IMR-90 (cell line): ENCODE measurements at regions of chr1 and their contacts with region 1.

Region 1: DNA sequence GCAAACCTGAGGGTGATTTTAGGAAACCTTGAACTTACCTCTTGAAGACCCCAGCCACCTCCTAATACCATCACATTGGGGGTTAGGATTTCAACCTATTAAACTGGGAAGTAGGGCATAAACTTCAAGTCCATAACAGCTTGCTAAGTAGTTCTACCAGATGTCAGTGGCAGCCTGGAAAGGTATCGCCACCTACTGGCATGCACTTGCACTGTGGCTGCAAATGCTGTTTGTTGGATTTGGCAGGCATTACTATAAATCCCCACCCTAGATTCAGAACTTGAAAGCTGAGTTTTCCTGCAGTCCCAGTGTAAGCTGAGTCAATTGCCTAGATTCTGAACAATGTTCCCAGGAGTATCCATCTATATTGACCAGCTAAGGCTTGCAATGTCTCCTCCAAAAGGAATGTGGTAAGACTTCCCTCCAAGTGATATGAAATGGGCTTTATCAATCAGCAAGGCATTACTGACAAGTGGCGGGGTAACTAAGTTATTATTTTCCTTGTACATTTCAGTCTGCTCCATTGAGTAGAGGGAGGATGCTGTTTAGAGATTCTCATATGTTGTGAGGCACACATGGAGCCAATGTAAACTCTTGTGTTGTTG is 474.5 kb downstream of the PTPRC start:
- DNase-seq: peak; percentile 82
- ATAC-seq: peak; percentile 73; the same call in 1 of the 2 replicates
- H3K4me3 ChIP-seq: no peak overlapping the region
- H3K27ac ChIP-seq: no peak overlapping the region
- H3K4me1 ChIP-seq: no peaks in the 10 kb centered on the region
- H3K27me3 ChIP-seq: no peaks in the 10 kb centered on the region
- CTCF ChIP-seq: peak; percentile 87
- POLR2A ChIP-seq: no peak
- RAD21 ChIP-seq: peak; percentile 90

Region 2: GRCh38 chr1:198756470-198756869 is 356.9 kb before region 1 on chr1:
- CTCF ChIA-PET with region 1: interaction called, 3 read pairs
- POLR2A ChIA-PET with region 1: no interaction called
- dilution Hi-C with region 1: no loop called
- in situ Hi-C with region 1: no loop called
- intact Hi-C with region 1: loop called (anchors 5 kb)
- DNase-seq: peak; percentile 36
- ATAC-seq: peak; percentile 72; the same call in 1 of the 2 replicates
- H3K4me3 ChIP-seq: no peak overlapping the region
- H3K27ac ChIP-seq: no peak overlapping the region
- H3K4me1 ChIP-seq: no peaks in the 10 kb centered on the region
- H3K27me3 ChIP-seq: no peaks in the 10 kb centered on the region
- CTCF ChIP-seq: peak; percentile 49
- POLR2A ChIP-seq: no peak
- RAD21 ChIP-seq: peak; percentile 44

Region 3: GRCh38 chr1:198771563-198772153 is 341.7 kb before region 1 on chr1:
- CTCF ChIA-PET with region 1: interaction called, 5 read pairs
- POLR2A ChIA-PET with region 1: no interaction called
- dilution Hi-C with region 1: no loop called
- in situ Hi-C with region 1: loop called (anchors 25 kb)
- intact Hi-C with region 1: loop called (anchors 1 kb)
- DNase-seq: peak; percentile 56
- ATAC-seq: no peak; the same call in 1 of the 2 replicates
- H3K4me3 ChIP-seq: no peak overlapping the region
- H3K27ac ChIP-seq: no peak overlapping the region
- H3K4me1 ChIP-seq: peaks cover 3% of the 10 kb centered on the region; the same call in 1 of the 2 replicates
- H3K27me3 ChIP-seq: no peaks in the 10 kb centered on the region
- CTCF ChIP-seq: peak; percentile 64
- POLR2A ChIP-seq: no peak
- RAD21 ChIP-seq: peak; percentile 86

Region 4: GRCh38 chr1:198788561-198789064 is 324.8 kb before region 1 on chr1:
- CTCF ChIA-PET with region 1: no interaction called
- POLR2A ChIA-PET with region 1: no interaction called
- dilution Hi-C with region 1: no loop called
- in situ Hi-C with region 1: loop called (anchors 25 kb)
- intact Hi-C with region 1: no loop called
- DNase-seq: no peak
- ATAC-seq: no peak
- H3K4me3 ChIP-seq: no peak overlapping the region
- H3K27ac ChIP-seq: no peak overlapping the region
- H3K4me1 ChIP-seq: no peaks in the 10 kb centered on the region
- H3K27me3 ChIP-seq: no peaks in the 10 kb centered on the region
- CTCF ChIP-seq: peak; percentile 9; the same call in 1 of the 2 replicates
- POLR2A ChIP-seq: no peak
- RAD21 ChIP-seq: no peak

Region 5: DNA sequence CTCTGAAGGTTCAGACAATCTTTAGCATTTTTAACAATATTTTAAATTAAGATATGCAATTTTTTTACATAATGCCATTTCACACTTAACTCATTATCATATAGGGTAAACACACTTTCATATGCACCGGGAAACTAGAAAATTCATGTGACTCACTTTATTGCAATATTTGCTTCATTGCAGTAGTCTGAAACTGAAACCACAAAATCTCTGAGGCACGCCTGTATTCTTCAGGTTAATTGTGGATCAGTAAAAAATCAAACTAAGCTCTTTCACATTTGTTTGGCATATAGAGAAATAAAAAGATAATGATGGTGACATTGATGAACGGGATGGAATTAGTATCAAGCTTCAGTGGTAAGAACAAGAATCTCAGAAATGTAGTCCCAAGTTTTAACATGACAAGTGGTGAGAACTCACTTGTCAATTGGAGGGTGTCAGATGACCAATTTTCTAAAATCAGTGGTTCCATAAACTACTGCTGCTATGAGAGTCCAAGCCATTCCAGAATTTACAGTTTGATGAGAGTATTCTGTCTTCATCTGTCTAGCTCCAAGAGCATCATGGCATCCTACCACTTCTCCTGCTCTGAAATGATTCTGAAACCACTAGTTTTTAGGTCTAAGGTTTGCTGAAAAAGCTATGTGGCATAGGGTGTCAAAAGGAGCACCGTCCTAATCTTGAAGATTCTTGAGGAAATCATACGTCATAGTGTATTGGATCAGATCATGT is 193.5 kb before region 1 on chr1:
- CTCF ChIA-PET with region 1: no interaction called
- POLR2A ChIA-PET with region 1: no interaction called
- dilution Hi-C with region 1: no loop called
- in situ Hi-C with region 1: no loop called
- intact Hi-C with region 1: loop called (anchors 5 kb)
- DNase-seq: no peak
- ATAC-seq: peak; percentile 11; the same call in 1 of the 2 replicates
- H3K4me3 ChIP-seq: no peak overlapping the region
- H3K27ac ChIP-seq: no peak overlapping the region
- H3K4me1 ChIP-seq: peaks cover 3% of the 10 kb centered on the region; the same call in 1 of the 2 replicates
- H3K27me3 ChIP-seq: no peaks in the 10 kb centered on the region
- CTCF ChIP-seq: no peak
- POLR2A ChIP-seq: no peak
- RAD21 ChIP-seq: no peak

Region 6: GRCh38 chr1:199394856-199395255 is 281.5 kb after region 1 on chr1:
- CTCF ChIA-PET with region 1: no interaction called
- POLR2A ChIA-PET with region 1: no interaction called
- dilution Hi-C with region 1: no loop called
- in situ Hi-C with region 1: no loop called
- intact Hi-C with region 1: no loop called
- DNase-seq: no peak
- ATAC-seq: no peak
- H3K4me3 ChIP-seq: no peak overlapping the region
- H3K27ac ChIP-seq: no peak overlapping the region
- H3K4me1 ChIP-seq: no peaks in the 10 kb centered on the region
- H3K27me3 ChIP-seq: no peaks in the 10 kb centered on the region
- CTCF ChIP-seq: no peak
- POLR2A ChIP-seq: no peak
- RAD21 ChIP-seq: no peak

Region 7: GRCh38 chr1:199463521-199464128 is 350.3 kb after region 1 on chr1:
- CTCF ChIA-PET with region 1: no interaction called
- POLR2A ChIA-PET with region 1: no interaction called
- dilution Hi-C with region 1: no loop called
- in situ Hi-C with region 1: no loop called
- intact Hi-C with region 1: loop called (anchors 5 kb)
- DNase-seq: peak; percentile 82
- ATAC-seq: peak; percentile 92
- H3K4me3 ChIP-seq: no peak overlapping the region
- H3K27ac ChIP-seq: no peak overlapping the region
- H3K4me1 ChIP-seq: no peaks in the 10 kb centered on the region; the same call in 1 of the 2 replicates
- H3K27me3 ChIP-seq: no peaks in the 10 kb centered on the region
- CTCF ChIP-seq: peak; percentile 71
- POLR2A ChIP-seq: no peak
- RAD21 ChIP-seq: peak; percentile 89

Region 8: DNA sequence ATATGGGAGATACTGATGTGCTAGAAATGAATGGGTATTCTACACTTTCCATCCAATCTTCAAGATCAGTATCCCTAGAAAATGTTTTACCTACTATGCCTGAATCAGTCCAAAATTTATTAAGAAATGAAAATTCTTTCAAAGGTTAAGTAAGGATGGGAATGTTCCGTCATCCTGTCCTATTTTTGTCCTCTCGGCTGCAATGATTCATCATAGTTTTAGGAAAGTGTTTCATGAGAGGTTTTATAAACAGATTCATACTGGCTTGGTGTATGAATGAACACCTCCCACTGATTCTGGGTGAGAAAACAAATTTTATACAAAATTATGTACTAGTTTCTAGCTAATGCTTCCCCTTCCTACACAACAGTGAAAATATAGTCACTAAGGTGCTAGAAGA is 409.6 kb after region 1 on chr1:
- CTCF ChIA-PET with region 1: no interaction called
- POLR2A ChIA-PET with region 1: no interaction called
- dilution Hi-C with region 1: no loop called
- in situ Hi-C with region 1: no loop called
- intact Hi-C with region 1: no loop called
- DNase-seq: peak; percentile 20
- ATAC-seq: no peak; the same call in 1 of the 2 replicates
- H3K4me3 ChIP-seq: no peak overlapping the region
- H3K27ac ChIP-seq: no peak overlapping the region
- H3K4me1 ChIP-seq: no peaks in the 10 kb centered on the region
- H3K27me3 ChIP-seq: no peaks in the 10 kb centered on the region
- CTCF ChIP-seq: no peak
- POLR2A ChIP-seq: no peak
- RAD21 ChIP-seq: no peak